ENCODE measurements at regions of chr16 and their contacts with region 1.

Region 1: GRCh38 chr16:89409161-89409711 is 81.1 kb downstream of the ANKRD11 start:
- DNase-seq: no peak
- H3K4me3 ChIP-seq: no peak overlapping the region
- H3K27ac ChIP-seq: peak overlapping the region in 3 of 5 donors; percentile 20 to 76 (median 59)
- H3K4me1 ChIP-seq: peaks cover 48 to 94% of the 10 kb centered on the region in 2 donors
- H3K27me3 ChIP-seq: no peaks in the 10 kb centered on the region
- CTCF ChIP-seq: no peak
- POLR2A ChIP-seq: no peak

Region 2: GRCh38 chr16:89360760-89361435 is 48.3 kb before region 1 on chr16:
- intact Hi-C with region 1: no loop called
- DNase-seq: no peak
- H3K4me3 ChIP-seq: no peak overlapping the region
- H3K27ac ChIP-seq: peak overlapping the region in 2 of 5 donors; percentile 37 to 59
- H3K4me1 ChIP-seq: peaks cover 17 to 83% of the 10 kb centered on the region in 2 donors
- H3K27me3 ChIP-seq: no peaks in the 10 kb centered on the region
- CTCF ChIP-seq: no peak
- POLR2A ChIP-seq: no peak

Region 3: GRCh38 chr16:89489040-89489721 is 79.9 kb after region 1 on chr16:
- intact Hi-C with region 1: loop called in 1 of 2 experiments (anchors 10 kb)
- DNase-seq: peak; percentile 79 to 96 (median 92)
- H3K4me3 ChIP-seq: peak overlapping the region in 2 of 4 donors; percentile 61 to 97
- H3K27ac ChIP-seq: peak overlapping the region; percentile 55 to 100 (median 96)
- H3K4me1 ChIP-seq: peaks cover 36 to 60% of the 10 kb centered on the region in 2 donors
- H3K27me3 ChIP-seq: no peaks in the 10 kb centered on the region
- CTCF ChIP-seq: peak in 5 of 6 experiments; percentile 20 to 63 (median 56)
- POLR2A ChIP-seq: peak in 1 of 2 donors; percentile 72

Measured in adrenal gland (tissue), 19 donors.